Cardiac septum (tissue), 1 donor: ENCODE measurements at regions of chr12 and their contacts with region 1.

Region 1: GRCh38 chr12:49288412-49288853 is 6.5 kb upstream of the PRPH start:
- DNase-seq: peak; percentile 75

Region 2: GRCh38 chr12:49347384-49348237 is 59.2 kb after region 1 on chr12:
- intact Hi-C with region 1: loop called (anchors 2 kb)
- DNase-seq: peak; percentile 92

Region 3: DNA sequence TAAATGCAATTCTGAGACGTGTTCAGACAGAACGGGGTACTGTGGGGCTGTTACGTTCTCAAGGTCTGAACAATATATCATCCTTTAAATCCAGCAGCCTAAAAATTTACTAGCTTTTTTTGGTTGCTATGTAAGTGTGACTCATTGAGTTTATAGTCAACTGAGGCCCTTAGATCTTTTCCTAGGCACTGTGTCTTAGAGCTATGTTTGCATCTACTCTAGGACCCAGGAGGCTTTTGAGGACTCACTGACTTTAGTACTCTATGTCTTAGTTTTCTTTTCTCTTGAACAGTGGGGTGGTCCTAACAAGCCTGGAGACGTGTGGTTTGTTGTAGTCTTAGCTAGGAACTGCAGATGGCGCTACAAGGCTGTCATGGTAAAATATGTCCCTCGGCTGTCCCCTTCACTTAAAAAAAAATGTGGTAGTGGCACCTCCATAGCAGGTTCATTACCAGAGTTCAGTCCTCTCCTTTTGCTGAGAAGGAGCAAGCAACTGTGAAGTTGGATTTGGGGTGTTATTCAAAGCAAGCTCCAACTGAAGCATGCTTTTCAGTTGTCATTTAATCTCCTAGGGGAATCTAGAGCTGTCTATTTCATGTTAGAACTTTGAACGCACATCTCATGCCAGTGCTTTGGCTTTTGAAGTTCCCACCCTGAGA is 70.2 kb after region 1 on chr12:
- intact Hi-C with region 1: no loop called
- DNase-seq: no peak